CD8-positive, alpha-beta T cell (primary cell): ENCODE measurements at regions of chr5 and their contacts with region 1.

Region 1: GRCh38 chr5:39209924-39210323 is 9.4 kb downstream of the FYB1 start:
- DNase-seq: peak; percentile 61 to 94 (median 83)
- ATAC-seq: peak; percentile 76
- H3K4me3 ChIP-seq: peak overlapping the region; percentile 12 to 49
- H3K4me3 Mint-ChIP-seq: peak overlapping the region; percentile 68
- H3K27ac ChIP-seq: peak overlapping the region; percentile 65 to 88
- H3K27ac Mint-ChIP-seq: peak overlapping the region; percentile 96
- H3K4me1 ChIP-seq: peaks cover 97% of the 10 kb centered on the region
- H3K4me1 Mint-ChIP-seq: peaks cover 95% of the 10 kb centered on the region
- H3K27me3 ChIP-seq: no peaks in the 10 kb centered on the region
- H3K27me3 Mint-ChIP-seq: no peaks in the 10 kb centered on the region
- CTCF ChIP-seq: no peak

Region 2: GRCh38 chr5:39187831-39188731 is 21.8 kb before region 1 on chr5:
- CTCF ChIA-PET with region 1: interaction called, 11 read pairs
- POLR2A ChIA-PET with region 1: interaction called, 14 read pairs
- intact Hi-C with region 1: loop called in 1 of 2 experiments (anchors 2 kb)
- DNase-seq: peak in 4 of 9 experiments; percentile 47 to 66 (median 56)
- ATAC-seq: peak; percentile 53
- H3K4me3 ChIP-seq: peak overlapping the region; percentile 6 to 29
- H3K4me3 Mint-ChIP-seq: peak overlapping the region; percentile 75
- H3K27ac ChIP-seq: peak overlapping the region; percentile 51 to 88
- H3K27ac Mint-ChIP-seq: peak overlapping the region; percentile 98
- H3K4me1 ChIP-seq: peaks cover 90% of the 10 kb centered on the region
- H3K4me1 Mint-ChIP-seq: peaks cover 90% of the 10 kb centered on the region
- H3K27me3 ChIP-seq: no peaks in the 10 kb centered on the region
- H3K27me3 Mint-ChIP-seq: no peaks in the 10 kb centered on the region
- CTCF ChIP-seq: no peak

Region 3: GRCh38 chr5:39194466-39195136 is 15.3 kb before region 1 on chr5:
- CTCF ChIA-PET with region 1: interaction called, 17 read pairs
- POLR2A ChIA-PET with region 1: interaction called, 42 read pairs
- intact Hi-C with region 1: loop called in 1 of 2 experiments (anchors 2 kb)
- DNase-seq: peak in 1 of 9 experiments; percentile 41
- ATAC-seq: no peak
- H3K4me3 ChIP-seq: peak overlapping the region; percentile 12 to 28
- H3K4me3 Mint-ChIP-seq: peak overlapping the region; percentile 77
- H3K27ac ChIP-seq: peak overlapping the region; percentile 41 to 88
- H3K27ac Mint-ChIP-seq: peak overlapping the region; percentile 94
- H3K4me1 ChIP-seq: peaks cover 72% of the 10 kb centered on the region
- H3K4me1 Mint-ChIP-seq: peaks cover 76% of the 10 kb centered on the region
- H3K27me3 ChIP-seq: no peaks in the 10 kb centered on the region
- H3K27me3 Mint-ChIP-seq: no peaks in the 10 kb centered on the region
- CTCF ChIP-seq: no peak